Natural killer cell (primary cell): ENCODE measurements at regions of chr22 and their contacts with region 1.

Region 1: DNA sequence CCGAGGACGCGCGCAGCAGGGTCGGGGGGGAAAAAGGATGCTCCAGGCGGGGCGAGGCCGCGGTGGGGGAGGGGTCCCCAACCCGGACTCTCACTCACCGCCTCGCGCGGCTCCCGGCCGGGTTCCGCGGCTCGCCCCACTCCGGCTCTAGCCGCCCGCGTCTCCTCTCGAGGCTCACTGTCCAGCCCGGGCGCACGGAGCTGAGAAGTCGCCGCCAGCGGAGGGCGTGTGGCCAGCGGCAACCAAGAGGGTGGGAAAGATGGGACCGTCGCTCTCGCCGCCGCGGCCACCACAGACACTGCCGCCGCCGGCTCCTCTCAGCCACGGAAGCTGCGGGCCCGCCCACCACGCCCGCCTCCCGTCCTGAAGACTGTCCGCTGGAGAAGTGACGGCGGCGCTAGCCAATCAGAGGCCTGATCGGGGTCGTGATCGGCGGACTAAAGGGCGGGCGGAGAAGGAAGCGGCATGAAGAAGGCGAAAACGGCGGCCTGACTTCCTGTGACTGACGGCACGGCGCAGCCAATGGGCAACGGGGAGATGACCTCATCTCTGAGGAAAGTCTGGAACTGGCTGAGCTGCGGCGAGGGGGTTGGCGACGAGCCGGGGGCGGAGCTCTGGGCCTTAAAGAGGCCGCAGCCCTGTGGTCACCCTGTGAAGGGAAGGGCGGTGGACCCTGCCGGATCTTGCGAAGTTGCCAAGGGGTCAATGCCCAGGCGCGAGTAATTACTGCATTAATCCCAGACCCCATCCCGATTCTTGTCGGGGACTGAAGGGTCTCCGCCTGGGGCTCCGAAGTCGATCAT is at the start of gene MRTFA:
- DNase-seq: peak; percentile 99
- ATAC-seq: peak; percentile 90 to 97 (median 92)
- H3K4me3 ChIP-seq: peak within 1 kb of the TSS; percentile 77
- H3K4me3 Mint-ChIP-seq: peak within 1 kb of the TSS; percentile 95
- H3K27ac ChIP-seq: peak within 1 kb of the TSS; percentile 79
- H3K27ac Mint-ChIP-seq: peak within 1 kb of the TSS; percentile 97
- H3K4me1 ChIP-seq: peaks cover 22% of the 10 kb centered on the region
- H3K4me1 Mint-ChIP-seq: peaks cover 38 to 44% of the 10 kb centered on the region in 2 donors
- H3K27me3 ChIP-seq: no peaks in the 10 kb centered on the region
- H3K27me3 Mint-ChIP-seq: no peaks in the 10 kb centered on the region
- CTCF ChIP-seq: no peak
- total RNA-seq, gene MRTFA: 81.8 to 91.9 (median 83.5) TPM

Region 2: DNA sequence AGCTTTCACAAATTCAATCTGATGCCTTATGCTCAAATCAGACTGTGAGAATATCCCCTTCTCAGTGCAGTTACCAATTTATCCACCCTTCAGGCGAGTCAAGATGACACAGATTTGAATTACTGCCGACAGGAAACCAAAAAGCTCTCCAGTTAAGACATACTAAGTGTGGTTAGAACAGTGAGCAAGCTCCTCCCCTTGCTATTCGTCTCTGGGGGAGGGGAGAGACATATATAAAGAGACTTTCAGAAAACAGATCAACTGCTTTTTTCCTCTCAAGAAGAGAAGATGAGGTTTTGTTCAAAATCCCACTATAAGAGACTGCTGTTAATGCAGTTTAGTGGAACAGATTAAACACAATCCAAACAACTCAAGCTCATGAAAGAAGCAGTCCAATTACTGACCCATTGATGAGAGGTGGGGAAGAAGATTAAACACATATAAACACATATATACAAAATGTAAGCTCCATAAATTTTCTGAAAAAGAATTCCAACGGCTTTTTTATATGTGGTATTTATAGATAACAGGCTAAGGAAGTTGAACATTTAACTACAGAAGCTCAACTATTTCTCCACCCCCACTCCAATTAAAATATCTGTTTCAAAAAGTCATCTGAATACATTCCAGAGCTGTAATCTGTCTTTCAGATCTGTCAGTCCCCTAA is 102.7 kb before region 1 on chr22:
- intact Hi-C with region 1: loop called (anchors 2 kb)
- DNase-seq: peak in 1 of 2 donors; percentile 85
- ATAC-seq: peak; percentile 96 to 100 (median 99)
- H3K4me3 ChIP-seq: peak overlapping the region; percentile 6
- H3K4me3 Mint-ChIP-seq: peak overlapping the region; percentile 75
- H3K27ac ChIP-seq: peak overlapping the region; percentile 54
- H3K27ac Mint-ChIP-seq: peak overlapping the region; percentile 87 to 88
- H3K4me1 ChIP-seq: peaks cover 7% of the 10 kb centered on the region
- H3K4me1 Mint-ChIP-seq: peaks cover 37 to 45% of the 10 kb centered on the region in 2 donors
- H3K27me3 ChIP-seq: no peaks in the 10 kb centered on the region
- H3K27me3 Mint-ChIP-seq: no peaks in the 10 kb centered on the region
- CTCF ChIP-seq: no peak

Region 3: GRCh38 chr22:40818747-40819598 is 182.4 kb after region 1 on chr22 and contains the start of gene SLC25A17:
- intact Hi-C with region 1: loop called (anchors 2 kb)
- DNase-seq: peak; percentile 81 to 93
- ATAC-seq: peak; percentile 81 to 93 (median 85)
- H3K4me3 ChIP-seq: peak within 1 kb of the TSS; percentile 99
- H3K4me3 Mint-ChIP-seq: peak within 1 kb of the TSS; percentile 78
- H3K27ac ChIP-seq: peak within 1 kb of the TSS; percentile 89
- H3K27ac Mint-ChIP-seq: peak within 1 kb of the TSS; percentile 78 to 92
- H3K4me1 ChIP-seq: peaks cover 21% of the 10 kb centered on the region
- H3K4me1 Mint-ChIP-seq: peaks cover 32 to 35% of the 10 kb centered on the region in 2 donors
- H3K27me3 ChIP-seq: no peaks in the 10 kb centered on the region
- H3K27me3 Mint-ChIP-seq: no peaks in the 10 kb centered on the region
- CTCF ChIP-seq: peak; percentile 29
- total RNA-seq, gene SLC25A17: 9.2 to 13.4 (median 10.0) TPM